ENCODE measurements at regions of chr19 and their contacts with region 1.

Region 1: DNA sequence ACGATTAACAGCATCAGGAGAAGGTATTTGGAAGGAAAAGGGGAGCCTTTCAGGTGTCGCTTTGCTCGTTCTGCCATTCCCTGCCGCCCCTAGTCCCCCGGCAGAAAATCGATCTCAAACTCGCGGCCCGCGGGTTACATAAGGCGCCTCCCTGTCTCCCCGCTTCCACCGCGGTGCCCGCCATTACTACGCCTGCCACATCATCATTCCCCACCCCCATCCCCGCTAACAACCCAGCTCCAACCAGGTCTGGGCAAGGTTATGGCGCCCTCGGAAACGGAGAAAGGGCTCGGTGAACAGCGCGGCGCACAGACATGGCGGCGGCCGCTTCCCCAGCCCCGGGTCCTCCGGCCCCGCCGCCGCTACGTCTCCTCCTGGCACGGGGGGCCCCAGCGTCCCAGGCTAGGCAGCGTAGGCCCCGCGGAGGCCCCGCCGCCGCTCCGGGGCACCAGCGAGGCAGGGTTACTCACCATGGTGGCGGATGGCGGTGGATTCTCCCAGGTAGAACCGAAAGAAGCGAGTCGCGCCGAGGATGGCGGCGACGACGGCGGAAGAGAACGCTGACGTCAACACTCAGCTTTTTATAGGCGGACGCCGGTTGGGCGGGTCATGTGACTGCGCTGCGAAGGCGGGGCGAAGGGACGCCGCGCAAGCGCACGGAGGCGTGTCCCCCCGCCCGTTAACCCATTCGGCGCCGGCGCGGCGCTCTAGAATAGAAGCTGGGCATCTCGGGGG is at the start of gene EEF2:
- DNase-seq: peak; percentile 82 to 96 (median 90)
- ATAC-seq: peak; percentile 54
- H3K4me3 ChIP-seq: peak within 1 kb of the TSS; percentile 70 to 78
- H3K4me3 Mint-ChIP-seq: peak within 1 kb of the TSS; percentile 92
- H3K27ac ChIP-seq: peak within 1 kb of the TSS; percentile 83 to 85
- H3K27ac Mint-ChIP-seq: peak within 1 kb of the TSS; percentile 97
- H3K4me1 ChIP-seq: peaks cover 52% of the 10 kb centered on the region
- H3K4me1 Mint-ChIP-seq: peaks cover 57% of the 10 kb centered on the region
- H3K27me3 ChIP-seq: no peaks in the 10 kb centered on the region
- H3K27me3 Mint-ChIP-seq: no peaks in the 10 kb centered on the region
- CTCF ChIP-seq: no peak
- total RNA-seq, gene EEF2: 2,844 to 2,933 TPM

Region 2: GRCh38 chr19:3557461-3558248 is 427.4 kb before region 1 on chr19 and contains the start of gene MFSD12:
- CTCF ChIA-PET with region 1: no interaction called
- POLR2A ChIA-PET with region 1: no interaction called
- intact Hi-C with region 1: loop called in 1 of 2 experiments (anchors 5 kb)
- DNase-seq: peak; percentile 88 to 97 (median 96)
- ATAC-seq: peak; percentile 85
- H3K4me3 ChIP-seq: peak within 1 kb of the TSS; percentile 68 to 95
- H3K4me3 Mint-ChIP-seq: peak within 1 kb of the TSS; percentile 96
- H3K27ac ChIP-seq: peak within 1 kb of the TSS; percentile 56 to 64
- H3K27ac Mint-ChIP-seq: peak within 1 kb of the TSS; percentile 95
- H3K4me1 ChIP-seq: peaks cover 46% of the 10 kb centered on the region
- H3K4me1 Mint-ChIP-seq: peaks cover 36% of the 10 kb centered on the region
- H3K27me3 ChIP-seq: no peaks in the 10 kb centered on the region
- H3K27me3 Mint-ChIP-seq: no peaks in the 10 kb centered on the region
- CTCF ChIP-seq: no peak
- total RNA-seq, gene MFSD12: 42.3 to 42.7 TPM

Region 3: GRCh38 chr19:3748965-3749364 is 236.1 kb before region 1 on chr19:
- CTCF ChIA-PET with region 1: no interaction called
- POLR2A ChIA-PET with region 1: no interaction called
- intact Hi-C with region 1: no loop called
- DNase-seq: no peak
- ATAC-seq: no peak
- H3K4me3 ChIP-seq: no peak overlapping the region
- H3K4me3 Mint-ChIP-seq: no peak overlapping the region
- H3K27ac ChIP-seq: no peak overlapping the region
- H3K27ac Mint-ChIP-seq: no peak overlapping the region
- H3K4me1 ChIP-seq: no peaks in the 10 kb centered on the region
- H3K4me1 Mint-ChIP-seq: no peaks in the 10 kb centered on the region
- H3K27me3 ChIP-seq: no peaks in the 10 kb centered on the region
- H3K27me3 Mint-ChIP-seq: no peaks in the 10 kb centered on the region
- CTCF ChIP-seq: no peak

Region 4: DNA sequence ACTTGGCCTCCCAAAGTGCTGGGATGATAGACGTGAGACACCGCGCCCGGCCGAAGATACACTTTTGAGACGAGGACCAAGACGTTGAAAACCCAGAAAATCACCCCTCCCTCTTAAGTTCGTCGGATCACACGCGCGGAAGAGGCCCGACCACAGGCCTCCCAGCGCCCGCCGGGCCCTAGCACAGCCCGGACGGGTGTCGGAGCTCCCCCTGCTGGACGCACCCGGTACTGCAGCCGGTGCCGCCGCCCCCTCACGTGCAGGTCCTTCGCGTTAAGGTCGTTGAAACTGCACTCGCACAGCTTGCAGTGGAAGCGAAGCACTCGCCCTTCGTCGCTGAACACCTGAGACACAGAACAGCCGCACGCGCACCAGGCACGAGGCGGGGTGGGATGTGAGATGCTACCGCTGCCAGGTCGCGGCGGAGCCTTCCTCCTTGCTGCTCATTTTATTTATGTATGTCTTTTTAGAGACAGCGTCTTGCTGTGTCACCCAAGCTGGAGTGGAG is 163.2 kb before region 1 on chr19:
- CTCF ChIA-PET with region 1: interaction called, 3 read pairs
- POLR2A ChIA-PET with region 1: no interaction called
- intact Hi-C with region 1: loop called in 1 of 2 experiments (anchors 5 kb)
- DNase-seq: peak; percentile 84 to 98 (median 87)
- ATAC-seq: peak; percentile 99
- H3K4me3 ChIP-seq: peak overlapping the region in 1 of 2 experiments; percentile 30
- H3K4me3 Mint-ChIP-seq: peak overlapping the region; percentile 35
- H3K27ac ChIP-seq: no peak overlapping the region
- H3K27ac Mint-ChIP-seq: peak overlapping the region; percentile 64
- H3K4me1 ChIP-seq: peaks cover 32% of the 10 kb centered on the region
- H3K4me1 Mint-ChIP-seq: peaks cover 17% of the 10 kb centered on the region
- H3K27me3 ChIP-seq: no peaks in the 10 kb centered on the region
- H3K27me3 Mint-ChIP-seq: no peaks in the 10 kb centered on the region
- CTCF ChIP-seq: peak; percentile 98

Region 5: DNA sequence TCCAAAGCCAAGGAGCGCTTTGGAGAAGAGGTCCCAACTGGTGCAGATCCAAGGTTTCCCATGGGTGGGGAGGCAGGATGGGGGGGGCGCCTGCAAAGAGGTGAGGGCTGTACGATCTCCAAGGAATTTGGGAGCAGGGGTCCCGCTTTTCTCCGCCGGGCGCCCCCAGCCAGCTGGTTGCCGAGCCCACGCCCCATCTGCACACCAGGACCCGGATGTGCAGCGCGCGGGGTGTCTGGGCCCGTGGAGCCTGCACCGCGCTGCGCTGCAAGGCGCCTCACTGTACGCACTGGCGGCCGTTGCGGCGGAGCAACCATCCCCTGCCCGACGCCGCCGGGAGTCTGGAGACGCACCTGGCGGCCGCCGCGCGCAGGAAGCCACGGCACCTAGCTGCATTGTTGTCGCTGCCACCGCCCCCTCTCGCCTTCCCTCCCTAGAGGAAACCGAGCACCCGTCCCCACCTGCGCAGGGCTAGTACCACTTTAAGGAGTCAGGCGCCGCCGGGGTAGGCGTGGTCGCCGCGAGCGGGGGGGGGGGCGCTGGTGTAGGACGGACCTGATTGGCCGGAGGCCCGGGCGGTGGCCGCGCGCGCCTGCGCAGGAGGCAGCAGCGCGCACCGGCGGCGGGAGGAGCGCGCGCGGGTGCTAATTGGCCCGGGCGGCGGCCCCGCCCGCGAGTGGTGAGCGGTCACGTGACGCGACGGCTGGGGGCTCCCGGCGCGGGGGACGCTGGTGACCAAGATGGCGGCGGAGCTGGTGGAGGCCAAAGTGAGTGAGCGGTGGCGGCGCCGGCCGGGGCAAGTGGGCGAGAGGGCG is 22.2 kb after region 1 on chr19 and contains the start of gene PIAS4:
- CTCF ChIA-PET with region 1: interaction called, 5 read pairs
- POLR2A ChIA-PET with region 1: interaction called, 24 read pairs
- intact Hi-C with region 1: loop called (anchors 1 kb)
- DNase-seq: peak; percentile 89 to 99 (median 96)
- ATAC-seq: peak; percentile 91
- H3K4me3 ChIP-seq: peak within 1 kb of the TSS; percentile 68 to 87
- H3K4me3 Mint-ChIP-seq: peak within 1 kb of the TSS; percentile 83
- H3K27ac ChIP-seq: peak within 1 kb of the TSS; percentile 46 to 58
- H3K27ac Mint-ChIP-seq: peak within 1 kb of the TSS; percentile 84
- H3K4me1 ChIP-seq: peaks cover 38% of the 10 kb centered on the region
- H3K4me1 Mint-ChIP-seq: peaks cover 24% of the 10 kb centered on the region
- H3K27me3 ChIP-seq: no peaks in the 10 kb centered on the region
- H3K27me3 Mint-ChIP-seq: no peaks in the 10 kb centered on the region
- CTCF ChIP-seq: no peak
- total RNA-seq, gene PIAS4: 11.6 to 14.9 TPM

Region 6: GRCh38 chr19:4115050-4115817 is 130.2 kb after region 1 on chr19:
- CTCF ChIA-PET with region 1: interaction called, 7 read pairs
- POLR2A ChIA-PET with region 1: interaction called, 7 read pairs
- intact Hi-C with region 1: loop called in 1 of 2 experiments (anchors 2 kb)
- DNase-seq: peak; percentile 39 to 91 (median 73)
- ATAC-seq: peak; percentile 99
- H3K4me3 ChIP-seq: peak overlapping the region in 1 of 2 experiments; percentile 50
- H3K4me3 Mint-ChIP-seq: peak overlapping the region; percentile 70
- H3K27ac ChIP-seq: peak overlapping the region; percentile 52 to 68
- H3K27ac Mint-ChIP-seq: peak overlapping the region; percentile 90
- H3K4me1 ChIP-seq: peaks cover 32% of the 10 kb centered on the region
- H3K4me1 Mint-ChIP-seq: peaks cover 45% of the 10 kb centered on the region
- H3K27me3 ChIP-seq: no peaks in the 10 kb centered on the region
- H3K27me3 Mint-ChIP-seq: no peaks in the 10 kb centered on the region
- CTCF ChIP-seq: no peak

Region 7: DNA sequence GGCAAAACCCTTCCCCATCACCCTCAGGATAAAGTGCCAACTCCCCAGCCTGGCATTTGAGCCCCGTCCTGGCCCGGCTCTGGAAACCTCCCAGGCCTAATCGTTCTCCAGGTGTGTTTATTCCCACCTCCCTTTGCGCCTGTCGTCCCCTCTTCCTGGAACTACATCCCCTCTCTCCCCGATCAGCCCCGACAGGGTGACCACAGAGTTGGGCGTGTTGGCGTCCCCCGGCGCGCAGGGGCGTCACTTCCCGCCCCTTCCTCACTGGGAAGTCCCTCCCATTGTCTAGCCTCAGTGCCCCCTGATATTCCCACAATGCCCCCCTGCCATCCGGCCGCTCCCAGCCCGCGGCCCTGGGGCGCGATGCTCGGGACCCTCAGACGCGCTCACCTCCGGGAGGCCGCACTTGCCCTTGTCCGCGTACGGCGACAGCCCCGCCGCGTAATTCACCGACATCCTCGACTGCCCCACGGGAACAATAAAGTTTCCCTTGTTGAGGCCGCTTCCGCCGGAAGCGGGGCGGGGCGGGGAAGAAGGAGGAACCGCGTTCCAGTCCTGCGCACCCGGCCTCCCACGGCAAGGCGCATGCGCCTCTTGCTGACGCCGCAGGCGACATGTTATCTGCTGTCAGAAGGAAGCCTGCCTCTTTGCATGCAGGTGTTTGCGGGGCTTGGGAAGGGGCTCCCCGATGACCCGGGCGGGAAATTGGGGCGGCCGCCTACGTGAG is 197.2 kb after region 1 on chr19 and contains the starts of genes ANKRD24 and SIRT6:
- CTCF ChIA-PET with region 1: interaction called, 3 read pairs
- POLR2A ChIA-PET with region 1: interaction called, 3 read pairs
- intact Hi-C with region 1: loop called (anchors 1 kb)
- DNase-seq: peak; percentile 91 to 98 (median 97)
- ATAC-seq: peak; percentile 88
- H3K4me3 ChIP-seq: peak within 1 kb of the TSS; percentile 79 to 95
- H3K4me3 Mint-ChIP-seq: peak within 1 kb of the TSS; percentile 98
- H3K27ac ChIP-seq: peak within 1 kb of the TSS; percentile 74 to 76
- H3K27ac Mint-ChIP-seq: peak within 1 kb of the TSS; percentile 93
- H3K4me1 ChIP-seq: peaks cover 28% of the 10 kb centered on the region
- H3K4me1 Mint-ChIP-seq: peaks cover 31% of the 10 kb centered on the region
- H3K27me3 ChIP-seq: no peaks in the 10 kb centered on the region
- H3K27me3 Mint-ChIP-seq: peaks cover 2% of the 10 kb centered on the region
- CTCF ChIP-seq: no peak
- total RNA-seq, gene ANKRD24: 0.83 to 1.2 TPM
- total RNA-seq, gene SIRT6: 12.0 to 13.0 TPM

Region 8: GRCh38 chr19:4246767-4247593 is 261.9 kb after region 1 on chr19 and contains the start of gene YJU2:
- CTCF ChIA-PET with region 1: no interaction called
- POLR2A ChIA-PET with region 1: no interaction called
- intact Hi-C with region 1: loop called (anchors 5 kb)
- DNase-seq: peak; percentile 91 to 100 (median 98)
- ATAC-seq: peak; percentile 95
- H3K4me3 ChIP-seq: peak within 1 kb of the TSS; percentile 82 to 87
- H3K4me3 Mint-ChIP-seq: peak within 1 kb of the TSS; percentile 93
- H3K27ac ChIP-seq: peak within 1 kb of the TSS; percentile 96 to 100
- H3K27ac Mint-ChIP-seq: peak within 1 kb of the TSS; percentile 99
- H3K4me1 ChIP-seq: peaks cover 19% of the 10 kb centered on the region
- H3K4me1 Mint-ChIP-seq: peaks cover 22% of the 10 kb centered on the region
- H3K27me3 ChIP-seq: no peaks in the 10 kb centered on the region
- H3K27me3 Mint-ChIP-seq: peaks cover 2% of the 10 kb centered on the region
- CTCF ChIP-seq: peak; percentile 68
- total RNA-seq, gene YJU2: 53.9 to 61.6 TPM

Measured in CD8-positive, alpha-beta T cell (primary cell).